Activated B cell treated with CpG ODN at 0.5 μM for 24 hours (primary cell): ENCODE measurements at regions of chr3 and their contacts with region 1.

Region 1: DNA sequence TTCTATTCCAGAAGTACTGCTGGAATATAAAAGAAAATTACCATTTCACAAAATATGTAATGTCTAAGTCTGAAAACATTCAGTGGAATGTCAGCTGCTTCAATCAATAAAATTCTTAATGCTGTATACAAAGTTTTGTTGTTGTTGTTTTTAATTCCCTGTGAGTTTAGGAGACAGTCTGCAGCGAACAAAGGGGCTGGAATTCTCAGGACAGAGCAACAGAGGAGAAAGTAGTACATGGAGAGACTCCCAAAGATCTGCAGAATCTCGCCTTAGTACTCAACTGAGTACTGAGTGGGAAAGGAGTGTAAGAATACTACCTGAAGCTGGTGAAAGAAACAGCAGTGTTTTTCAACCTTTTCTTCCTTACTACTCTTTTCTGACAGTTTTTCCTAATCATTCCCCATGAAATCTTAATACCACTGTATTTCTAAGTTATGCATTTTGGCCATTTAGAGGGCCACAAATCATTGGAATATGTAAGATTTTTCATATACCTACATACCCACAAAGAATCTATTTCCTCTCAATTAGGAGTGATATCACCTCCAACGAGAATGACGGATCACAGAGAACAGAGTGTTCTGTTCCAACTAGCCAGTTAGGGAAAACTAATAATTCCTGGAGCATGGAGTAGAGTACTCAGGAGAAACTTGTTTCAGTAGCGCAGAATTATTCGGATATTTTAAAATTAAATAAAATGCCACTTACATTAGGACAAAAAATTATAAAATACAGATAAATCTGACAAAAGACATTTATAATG is 16.0 kb downstream of the ANKRD28 start:
- DNase-seq: no peak
- ATAC-seq: no peak
- H3K4me3 Mint-ChIP-seq: no peak overlapping the region
- H3K27ac Mint-ChIP-seq: no peak overlapping the region
- H3K4me1 Mint-ChIP-seq: peaks cover 5% of the 10 kb centered on the region
- H3K27me3 Mint-ChIP-seq: no peaks in the 10 kb centered on the region
- CTCF ChIP-seq: no peak

Region 2: DNA sequence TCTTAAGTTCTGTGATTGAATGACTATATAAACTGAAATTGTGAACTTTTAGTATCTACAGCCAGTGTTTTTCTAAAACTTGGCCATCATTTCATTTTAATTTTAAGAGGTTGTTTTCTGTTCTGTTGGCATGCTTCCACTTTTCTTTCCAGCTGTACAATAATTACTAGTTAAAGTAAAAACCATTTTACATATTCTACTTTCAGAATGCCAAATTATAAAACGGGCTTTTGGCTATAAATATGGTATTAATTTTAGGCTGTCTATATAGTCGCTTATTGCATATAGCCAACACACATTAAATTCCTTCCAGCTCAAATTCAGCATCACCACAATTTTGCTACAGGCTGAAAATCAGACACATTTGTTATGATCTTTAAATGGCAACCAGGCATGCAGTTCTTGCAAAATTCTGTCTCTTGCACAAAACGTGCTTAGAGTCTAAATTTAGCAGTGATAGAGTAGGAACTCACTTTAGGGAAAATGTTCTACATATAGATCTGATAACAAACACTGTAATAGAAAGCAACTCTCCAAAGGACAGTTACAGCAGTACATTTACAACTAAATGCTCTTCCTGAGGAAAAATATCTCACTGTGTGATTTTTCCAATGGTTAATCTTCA is 99.1 kb before region 1 on chr3:
- CTCF ChIA-PET with region 1: no interaction called
- POLR2A ChIA-PET with region 1: no interaction called
- intact Hi-C with region 1: no loop called
- DNase-seq: no peak
- ATAC-seq: no peak
- H3K4me3 Mint-ChIP-seq: no peak overlapping the region
- H3K27ac Mint-ChIP-seq: no peak overlapping the region
- H3K4me1 Mint-ChIP-seq: no peaks in the 10 kb centered on the region
- H3K27me3 Mint-ChIP-seq: no peaks in the 10 kb centered on the region
- CTCF ChIP-seq: no peak

Region 3: DNA sequence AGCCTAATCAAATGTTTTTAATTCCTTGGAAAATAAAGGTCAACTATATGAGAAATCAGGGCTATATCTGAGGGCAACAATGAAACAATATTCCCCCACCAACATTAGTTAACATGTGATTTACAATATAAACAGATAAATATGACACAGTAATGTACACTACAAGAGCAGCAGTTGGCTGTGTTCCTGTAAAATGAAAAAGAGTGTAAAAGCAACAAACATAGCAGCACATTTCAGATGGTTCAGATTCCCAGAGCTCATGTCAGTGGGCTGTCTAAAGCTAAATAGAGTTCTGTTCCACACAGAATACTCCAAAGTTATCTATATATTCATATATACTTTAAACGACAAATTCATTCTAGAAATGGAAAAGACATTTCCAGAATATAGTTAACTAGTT is 26.6 kb before region 1 on chr3:
- CTCF ChIA-PET with region 1: no interaction called
- POLR2A ChIA-PET with region 1: no interaction called
- intact Hi-C with region 1: loop called (anchors 2 kb)
- DNase-seq: no peak
- ATAC-seq: no peak
- H3K4me3 Mint-ChIP-seq: no peak overlapping the region
- H3K27ac Mint-ChIP-seq: no peak overlapping the region
- H3K4me1 Mint-ChIP-seq: peaks cover 8% of the 10 kb centered on the region
- H3K27me3 Mint-ChIP-seq: no peaks in the 10 kb centered on the region
- CTCF ChIP-seq: no peak

Region 4: DNA sequence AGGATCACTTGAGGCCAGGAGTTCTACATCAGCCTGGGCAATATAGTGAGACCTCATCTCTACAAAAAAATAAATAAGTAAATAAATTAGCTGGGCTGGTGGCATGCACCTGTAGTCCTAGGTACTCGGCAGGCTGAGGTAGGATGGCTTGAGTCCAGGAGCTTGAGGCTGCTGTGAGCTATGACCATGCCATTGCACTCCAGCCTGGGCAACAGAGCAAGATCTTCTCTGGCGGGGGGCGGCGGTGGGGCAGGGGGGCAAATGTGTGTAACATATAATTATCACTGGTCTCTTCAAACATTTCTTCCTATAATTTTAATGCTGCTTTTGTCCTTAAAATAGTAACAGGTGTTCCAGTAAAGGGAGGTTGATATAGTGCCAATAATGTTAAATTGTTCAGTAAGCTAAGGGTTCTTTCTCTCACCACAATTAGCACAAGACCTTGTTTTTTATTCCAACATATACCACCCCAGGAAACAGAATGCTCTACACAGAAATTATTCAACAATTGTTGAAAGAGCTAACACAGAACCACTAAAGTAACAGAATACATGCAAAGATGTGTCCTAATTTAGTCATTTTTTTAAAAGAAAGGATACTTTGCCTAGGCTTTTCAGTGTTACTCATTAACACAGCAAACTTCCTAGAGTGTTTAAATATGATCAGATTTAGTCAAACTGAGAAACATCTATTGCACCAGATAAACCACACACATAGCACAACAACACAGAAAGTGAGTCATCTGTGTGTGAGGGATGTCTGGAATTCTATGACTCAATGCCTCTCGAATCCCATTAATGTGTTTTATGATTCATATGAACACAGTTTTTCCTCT is 13.2 kb before region 1 on chr3:
- CTCF ChIA-PET with region 1: no interaction called
- POLR2A ChIA-PET with region 1: no interaction called
- intact Hi-C with region 1: no loop called
- DNase-seq: no peak
- ATAC-seq: no peak
- H3K4me3 Mint-ChIP-seq: no peak overlapping the region
- H3K27ac Mint-ChIP-seq: no peak overlapping the region
- H3K4me1 Mint-ChIP-seq: peaks cover 37% of the 10 kb centered on the region
- H3K27me3 Mint-ChIP-seq: no peaks in the 10 kb centered on the region
- CTCF ChIP-seq: no peak

Region 5: DNA sequence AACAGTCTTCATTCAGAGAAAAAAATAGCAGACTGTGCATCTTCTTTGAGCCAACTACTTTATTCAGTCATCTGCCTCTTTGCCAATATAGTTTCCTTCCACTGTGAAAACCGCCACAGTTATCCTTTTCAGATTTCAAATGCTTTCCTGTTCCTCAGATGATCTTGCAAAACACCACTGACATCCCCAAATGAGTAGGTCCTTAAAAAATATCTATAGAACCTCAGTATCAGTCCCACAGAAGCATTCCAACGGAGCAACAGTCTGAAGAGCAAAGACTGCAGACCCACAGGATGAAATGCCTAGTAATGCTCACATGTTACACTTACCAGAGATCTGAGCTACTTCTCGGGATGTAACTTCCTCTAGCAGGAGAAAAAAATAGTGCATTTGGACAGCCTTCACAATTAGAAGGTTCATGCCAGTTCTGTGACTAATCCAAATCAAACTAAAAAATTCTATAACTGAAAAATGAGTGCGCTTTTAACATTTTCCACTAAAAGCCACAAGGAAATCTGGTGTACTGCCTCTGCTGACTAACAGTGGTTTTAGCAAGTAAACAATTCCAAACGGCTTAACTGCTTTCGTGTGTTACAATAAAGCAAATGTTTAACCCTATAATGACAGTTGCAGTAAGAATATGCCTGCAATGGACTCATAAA is 16.0 kb after region 1 on chr3 and contains the start of gene ANKRD28:
- CTCF ChIA-PET with region 1: no interaction called
- POLR2A ChIA-PET with region 1: interaction called, 5 read pairs
- intact Hi-C with region 1: loop called (anchors 2 kb)
- DNase-seq: no peak
- ATAC-seq: peak; percentile 20
- H3K4me3 Mint-ChIP-seq: peak within 1 kb of the TSS; percentile 68
- H3K27ac Mint-ChIP-seq: peak within 1 kb of the TSS; percentile 82
- H3K4me1 Mint-ChIP-seq: peaks cover 66% of the 10 kb centered on the region
- H3K27me3 Mint-ChIP-seq: no peaks in the 10 kb centered on the region
- CTCF ChIP-seq: no peak
- total RNA-seq, gene ANKRD28: 27.5 and 29.9 TPM in 2 replicates